Right ventricle myocardium inferior (tissue), 1 donor: ENCODE measurements at regions of chr4 and their contacts with region 1.

Region 1: DNA sequence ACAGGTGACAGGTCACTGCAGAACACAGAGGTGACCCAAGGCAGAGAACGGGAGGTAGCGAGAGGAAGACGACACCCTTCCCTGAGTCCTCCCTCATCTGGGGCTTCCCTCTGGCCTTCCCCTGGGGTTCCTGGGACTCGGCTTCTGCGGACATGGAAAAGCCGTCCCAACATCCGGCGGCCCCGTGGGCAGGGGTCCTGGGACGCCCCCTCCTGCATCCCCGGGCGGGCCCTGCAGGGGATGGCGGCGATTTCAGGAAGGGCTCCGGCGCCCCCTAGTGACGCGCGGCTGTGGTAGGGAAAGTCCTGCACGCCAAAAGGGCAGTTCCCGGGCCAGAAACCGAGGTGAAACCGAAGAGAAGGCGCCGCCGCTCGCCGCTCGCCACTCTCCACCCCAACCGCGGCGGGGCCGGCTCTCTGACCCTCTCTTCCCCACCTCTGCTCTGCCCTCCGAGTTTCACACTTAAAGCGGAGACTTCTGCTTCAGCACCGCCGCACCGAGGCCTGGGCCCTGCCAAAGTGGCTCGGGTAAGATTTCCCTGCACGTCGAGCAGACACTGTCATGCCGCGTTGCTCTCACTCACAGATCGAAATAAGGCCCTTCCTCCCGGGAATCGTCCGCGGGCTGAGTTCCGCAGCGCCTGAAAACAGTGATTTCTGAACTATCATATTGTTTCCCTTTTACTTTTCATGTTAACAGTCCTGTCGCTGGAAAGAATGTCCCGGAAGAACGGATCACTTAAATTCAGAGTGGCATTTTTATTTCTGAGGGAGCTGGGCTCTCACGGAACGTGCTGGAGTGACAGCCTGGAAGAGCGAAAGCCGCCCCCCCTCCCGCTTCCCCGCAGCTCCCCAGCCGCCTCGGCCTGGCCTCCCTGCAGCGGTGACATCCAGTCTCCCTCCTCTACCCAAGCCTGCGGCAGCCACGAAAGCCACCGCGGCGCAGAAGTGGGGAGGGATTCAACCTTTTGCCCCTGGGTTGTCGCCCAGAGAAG is 110.6 kb downstream of the DCTD start:
- DNase-seq: peak; percentile 87
- ATAC-seq: peak; percentile 90

Region 2: DNA sequence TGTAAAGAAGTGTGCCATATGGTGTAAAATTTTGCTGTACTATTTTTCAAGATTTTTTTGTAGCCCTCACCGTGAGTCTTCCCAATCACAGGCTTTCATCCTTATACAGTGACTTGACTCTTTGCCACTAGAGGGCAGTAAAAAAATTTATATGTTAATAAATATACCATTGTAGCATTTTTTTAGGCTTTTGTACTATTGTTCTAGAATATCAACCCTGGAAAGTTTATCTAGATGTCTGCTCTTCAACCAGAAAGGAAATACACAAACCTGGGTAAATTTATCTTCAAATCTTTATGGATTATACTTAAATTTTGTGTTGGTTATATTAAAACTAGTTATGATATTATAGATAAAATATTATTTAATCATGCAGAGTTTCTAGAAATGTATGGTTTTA is 328.1 kb before region 1 on chr4:
- intact Hi-C with region 1: loop called (anchors 2 kb)
- DNase-seq: no peak
- ATAC-seq: no peak

Region 3: DNA sequence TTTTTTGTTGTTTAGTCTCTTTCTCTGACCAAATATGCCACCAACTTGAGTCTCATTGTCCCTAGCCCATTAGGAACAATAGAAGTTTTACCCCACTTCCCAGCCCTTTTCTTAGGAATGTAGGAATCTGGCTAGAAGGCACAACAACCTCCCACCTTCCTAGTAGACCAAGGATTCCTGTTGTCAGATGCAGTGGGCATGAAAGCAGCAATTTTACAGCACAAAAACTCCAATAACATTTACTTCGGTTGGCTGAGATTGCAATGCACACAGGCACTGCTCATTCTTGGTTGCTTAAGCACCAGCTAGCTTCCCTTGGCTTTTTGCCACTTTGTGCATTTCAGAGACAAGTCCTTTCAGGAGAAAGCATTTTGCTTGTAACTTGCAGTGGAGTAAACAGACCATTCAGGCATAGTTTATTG is 250.5 kb before region 1 on chr4:
- intact Hi-C with region 1: loop called (anchors 10 kb)
- DNase-seq: no peak
- ATAC-seq: no peak

Region 4: DNA sequence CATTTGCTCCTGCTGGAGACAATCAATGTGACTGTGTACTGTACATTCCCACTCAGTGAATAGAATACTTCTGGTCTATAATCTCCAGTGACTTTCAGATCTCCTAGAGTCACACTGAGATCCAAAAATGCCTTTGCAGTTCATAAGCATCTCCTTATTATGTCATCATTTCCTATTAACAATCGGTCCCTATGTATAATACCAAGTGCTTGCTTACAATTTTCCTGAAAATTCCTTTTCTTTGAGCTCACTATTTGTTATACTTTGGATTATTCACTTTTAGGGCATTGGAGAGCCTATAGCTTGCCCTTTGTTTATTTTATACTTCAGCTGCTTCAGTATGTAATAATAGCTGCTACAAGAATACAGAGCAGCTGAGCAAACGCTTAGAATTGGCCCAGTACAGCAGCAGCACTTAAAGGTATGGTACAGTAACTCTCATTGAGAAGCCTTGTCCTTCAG is 202.4 kb before region 1 on chr4:
- intact Hi-C with region 1: no loop called
- DNase-seq: no peak
- ATAC-seq: no peak

Region 5: DNA sequence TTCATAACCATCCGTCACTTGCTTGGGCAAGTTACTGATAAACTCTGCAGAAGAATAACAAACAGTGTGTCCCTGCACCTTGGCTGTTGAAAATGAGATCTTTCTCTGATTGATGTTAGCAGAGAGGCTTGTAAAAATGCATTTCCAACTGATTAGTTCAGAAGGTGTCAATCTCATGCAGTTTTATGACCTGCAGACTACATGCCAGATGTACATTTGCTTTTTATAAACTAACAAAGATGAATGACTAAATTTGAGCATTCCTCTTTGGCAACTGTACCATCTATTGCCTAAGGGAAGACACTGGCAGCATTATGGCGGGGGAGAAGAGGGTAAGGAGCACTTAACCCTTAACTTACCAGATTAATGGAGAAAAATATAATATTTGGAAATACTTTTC is 82.1 kb before region 1 on chr4:
- intact Hi-C with region 1: no loop called
- DNase-seq: no peak
- ATAC-seq: no peak

Region 6: GRCh38 chr4:184762100-184762499 is 1955.5 kb after region 1 on chr4:
- intact Hi-C with region 1: no loop called
- DNase-seq: no peak
- ATAC-seq: no peak